ENCODE measurements at regions of chr7 and their contacts with region 1.

Region 1: GRCh38 chr7:31633894-31634494 is 53.0 kb upstream of the PPP1R17 start:
- DNase-seq: no peak
- H3K4me3 ChIP-seq: no peak overlapping the region
- H3K27ac ChIP-seq: no peak overlapping the region
- H3K4me1 ChIP-seq: no peaks in the 10 kb centered on the region
- H3K27me3 ChIP-seq: no peaks in the 10 kb centered on the region
- CTCF ChIP-seq: peak; percentile 27 to 72 (median 34)

Region 2: DNA sequence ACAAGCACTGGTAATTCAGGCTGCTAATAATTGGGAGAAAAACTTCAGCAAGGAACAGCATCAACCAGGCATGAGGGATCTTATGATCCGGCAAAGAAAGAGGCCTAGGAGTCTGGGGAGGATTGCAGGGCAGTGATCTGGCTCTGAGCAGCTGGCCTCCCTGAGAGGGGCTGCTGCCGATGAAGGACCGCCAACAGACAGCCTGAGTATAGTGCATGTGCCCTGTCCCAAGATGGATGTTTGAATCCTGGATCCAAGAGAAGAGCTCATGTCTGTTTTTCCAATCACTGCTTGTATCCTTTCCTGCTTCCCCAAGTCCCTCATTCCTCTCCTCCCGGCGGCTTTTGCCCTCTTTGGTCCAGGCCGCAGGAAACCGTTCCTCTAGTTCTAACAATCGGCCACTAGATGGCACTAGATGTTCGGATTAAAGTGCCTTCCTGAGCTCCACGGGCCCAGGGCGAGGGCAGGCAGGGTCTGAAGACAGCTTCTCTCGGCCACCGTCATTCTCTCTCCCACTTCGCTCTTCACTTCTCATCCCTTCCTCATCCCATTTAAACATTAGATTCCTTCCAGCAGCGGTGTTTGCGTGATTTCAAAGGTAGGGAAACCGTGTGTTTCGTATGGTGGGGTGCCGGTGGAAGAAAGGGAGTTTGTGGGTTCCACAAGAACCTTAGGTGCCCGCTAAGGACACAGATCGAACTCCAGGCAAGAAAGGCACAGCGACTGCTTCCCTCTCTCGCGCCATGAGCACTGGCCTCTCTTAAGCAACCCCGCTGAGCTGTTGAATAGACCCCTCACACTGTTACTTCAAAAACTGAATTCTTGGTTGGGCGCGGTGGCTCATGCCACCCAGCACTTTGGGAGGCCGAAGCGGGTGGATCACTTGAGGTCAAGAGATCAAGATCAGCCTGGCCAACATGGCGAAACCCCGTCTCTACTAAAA is 499.5 kb before region 1 on chr7:
- intact Hi-C with region 1: loop called (anchors 1 kb)
- DNase-seq: peak in 1 of 2 donors; percentile 76
- H3K4me3 ChIP-seq: no peak overlapping the region
- H3K27ac ChIP-seq: no peak overlapping the region
- H3K4me1 ChIP-seq: no peaks in the 10 kb centered on the region
- H3K27me3 ChIP-seq: no peaks in the 10 kb centered on the region
- CTCF ChIP-seq: peak; percentile 44 to 69 (median 66)

Region 3: DNA sequence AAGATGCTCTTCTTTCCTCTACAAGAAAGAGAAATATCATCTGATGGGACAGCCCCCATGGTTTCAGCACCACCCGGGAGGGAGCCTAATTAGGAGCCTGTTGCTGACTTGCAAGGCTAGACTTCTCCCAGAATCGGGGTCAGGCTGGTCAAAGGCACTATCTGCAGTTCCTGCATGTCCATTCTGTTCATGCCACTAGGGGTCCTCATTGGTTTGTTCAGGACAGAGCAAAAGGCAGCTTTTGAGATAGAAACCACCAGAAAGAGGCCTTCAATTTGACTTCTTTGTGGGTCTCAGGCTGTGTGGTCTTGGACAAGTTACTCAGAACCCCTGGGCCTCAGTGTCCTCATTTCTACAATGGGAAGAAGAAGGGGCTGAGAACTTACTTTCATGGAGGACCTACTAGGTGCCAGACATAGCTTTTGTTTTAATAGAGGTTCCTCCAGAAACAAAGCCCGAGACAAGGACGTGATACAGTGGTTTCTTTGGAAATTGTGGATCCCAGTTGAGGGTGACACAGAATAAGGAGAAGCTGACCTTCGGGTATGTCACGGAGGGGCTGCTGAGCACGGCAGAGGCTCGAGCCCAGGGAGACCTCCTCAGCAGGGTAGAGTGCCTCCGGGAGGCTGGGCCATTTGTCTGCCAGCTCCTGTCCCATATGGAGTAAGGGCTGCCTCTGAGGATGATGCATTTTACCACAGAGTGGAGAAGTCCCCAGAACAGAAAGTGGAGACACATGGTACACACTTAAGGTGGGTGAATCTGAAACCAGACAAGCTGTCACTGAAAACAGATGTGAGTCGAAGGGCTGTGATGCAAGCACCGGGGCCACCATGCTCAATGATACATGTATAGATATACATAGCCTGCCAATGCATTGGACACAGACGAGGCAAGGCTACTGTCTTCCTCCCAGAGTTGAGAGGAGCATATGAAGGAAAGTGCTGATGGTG is 260.4 kb before region 1 on chr7:
- intact Hi-C with region 1: loop called (anchors 10 kb)
- DNase-seq: no peak
- H3K4me3 ChIP-seq: no peak overlapping the region
- H3K27ac ChIP-seq: no peak overlapping the region
- H3K4me1 ChIP-seq: no peaks in the 10 kb centered on the region
- H3K27me3 ChIP-seq: no peaks in the 10 kb centered on the region
- CTCF ChIP-seq: peak in 1 of 3 experiments; percentile 33

Region 4: DNA sequence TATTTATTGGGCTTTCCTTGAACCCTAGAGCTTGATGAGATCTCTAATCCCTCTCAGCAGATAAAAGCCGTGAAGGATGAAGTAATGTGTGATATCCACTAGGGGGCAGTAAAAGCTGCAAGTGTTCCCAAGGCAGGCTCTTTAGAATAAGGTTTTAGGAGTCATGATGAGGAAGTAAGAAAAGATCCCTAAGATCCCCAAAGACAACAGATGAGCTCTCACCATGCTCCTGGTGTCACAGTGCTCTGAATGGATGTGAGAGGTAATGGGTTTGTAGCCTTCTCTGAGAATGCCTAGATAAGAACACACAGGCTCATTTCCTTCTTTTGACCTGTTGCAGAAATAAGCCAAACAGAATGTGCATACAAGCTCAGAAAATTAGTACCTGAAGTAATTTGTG is 190.5 kb before region 1 on chr7:
- intact Hi-C with region 1: loop called (anchors 2 kb)
- DNase-seq: no peak
- H3K4me3 ChIP-seq: no peak overlapping the region
- H3K27ac ChIP-seq: no peak overlapping the region
- H3K4me1 ChIP-seq: no peaks in the 10 kb centered on the region
- H3K27me3 ChIP-seq: no peaks in the 10 kb centered on the region
- CTCF ChIP-seq: peak; percentile 36 to 67 (median 59)

Region 5: DNA sequence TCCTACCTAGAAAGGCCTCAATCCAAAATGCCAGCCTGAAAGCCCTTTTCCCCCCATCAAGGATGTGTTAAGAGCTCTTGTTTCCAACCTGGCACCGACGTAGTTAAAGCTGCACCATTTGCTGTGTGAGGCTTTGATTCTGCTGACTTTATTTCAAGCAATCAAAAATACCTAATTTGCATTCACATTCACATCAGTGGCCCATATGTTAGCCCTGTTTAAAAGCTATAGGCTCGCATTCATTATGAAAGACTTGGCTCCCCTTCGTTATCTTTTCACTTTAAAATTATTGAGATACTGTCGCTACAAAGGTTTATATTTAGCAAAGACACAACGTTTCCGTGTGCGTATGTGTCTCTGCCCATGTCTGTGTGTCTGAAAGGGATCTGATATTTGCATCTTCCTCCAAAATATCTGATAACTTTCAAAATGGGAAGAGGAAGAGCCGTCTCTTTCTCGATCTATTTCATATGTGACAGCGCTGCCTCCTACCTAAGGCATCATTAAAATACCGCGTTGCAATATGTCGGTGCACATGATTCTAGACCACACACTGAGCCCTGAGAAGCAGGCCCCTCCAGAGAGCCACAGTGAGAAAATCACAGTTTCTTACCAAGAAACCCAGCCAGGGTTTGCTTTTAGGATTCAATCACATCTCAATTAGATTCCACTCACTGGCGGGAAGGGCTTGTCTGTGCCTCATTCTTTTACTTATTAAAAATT is 177.2 kb before region 1 on chr7:
- intact Hi-C with region 1: no loop called
- DNase-seq: no peak
- H3K4me3 ChIP-seq: no peak overlapping the region
- H3K27ac ChIP-seq: no peak overlapping the region
- H3K4me1 ChIP-seq: no peaks in the 10 kb centered on the region
- H3K27me3 ChIP-seq: no peaks in the 10 kb centered on the region
- CTCF ChIP-seq: no peak